Heart right ventricle (tissue), 16 donors: ENCODE measurements at regions of chr7 and their contacts with region 1.

Region 1: DNA sequence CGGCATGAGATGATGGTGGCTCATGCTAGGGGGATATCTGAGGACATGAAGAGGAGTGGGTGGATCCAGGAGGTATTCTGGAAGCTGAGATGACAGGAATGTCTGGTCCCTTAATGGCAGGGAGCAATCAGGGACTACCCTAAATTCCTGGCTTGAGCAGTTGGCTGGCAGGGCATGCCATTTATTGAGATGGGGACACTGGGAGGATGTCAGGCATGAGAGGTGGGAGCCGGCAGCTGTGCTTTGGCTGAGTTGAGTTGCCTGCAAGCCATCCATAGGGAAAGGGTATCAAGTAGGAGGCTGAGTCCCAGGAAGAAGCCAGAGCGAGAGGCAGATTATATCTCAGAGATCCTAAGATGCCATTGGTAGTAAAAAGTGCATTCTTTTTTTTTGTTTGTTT is 69.6 kb downstream of the COL26A1 start:
- DNase-seq: no peak
- ATAC-seq: no peak
- H3K4me3 ChIP-seq: no peak overlapping the region
- H3K27ac ChIP-seq: no peak overlapping the region
- H3K4me1 ChIP-seq: no peaks in the 10 kb centered on the region
- H3K27me3 ChIP-seq: peaks cover 0 to 72% (median 38%) of the 10 kb centered on the region in 7 donors
- CTCF ChIP-seq: no peak

Region 2: GRCh38 chr7:101347477-101347876 is 84.8 kb before region 1 on chr7:
- intact Hi-C with region 1: no loop called
- DNase-seq: no peak
- ATAC-seq: no peak
- H3K4me3 ChIP-seq: no peak overlapping the region
- H3K27ac ChIP-seq: no peak overlapping the region
- H3K4me1 ChIP-seq: no peaks in the 10 kb centered on the region
- H3K27me3 ChIP-seq: peaks cover 0 to 36% (median 6%) of the 10 kb centered on the region in 7 donors
- CTCF ChIP-seq: no peak

Region 3: DNA sequence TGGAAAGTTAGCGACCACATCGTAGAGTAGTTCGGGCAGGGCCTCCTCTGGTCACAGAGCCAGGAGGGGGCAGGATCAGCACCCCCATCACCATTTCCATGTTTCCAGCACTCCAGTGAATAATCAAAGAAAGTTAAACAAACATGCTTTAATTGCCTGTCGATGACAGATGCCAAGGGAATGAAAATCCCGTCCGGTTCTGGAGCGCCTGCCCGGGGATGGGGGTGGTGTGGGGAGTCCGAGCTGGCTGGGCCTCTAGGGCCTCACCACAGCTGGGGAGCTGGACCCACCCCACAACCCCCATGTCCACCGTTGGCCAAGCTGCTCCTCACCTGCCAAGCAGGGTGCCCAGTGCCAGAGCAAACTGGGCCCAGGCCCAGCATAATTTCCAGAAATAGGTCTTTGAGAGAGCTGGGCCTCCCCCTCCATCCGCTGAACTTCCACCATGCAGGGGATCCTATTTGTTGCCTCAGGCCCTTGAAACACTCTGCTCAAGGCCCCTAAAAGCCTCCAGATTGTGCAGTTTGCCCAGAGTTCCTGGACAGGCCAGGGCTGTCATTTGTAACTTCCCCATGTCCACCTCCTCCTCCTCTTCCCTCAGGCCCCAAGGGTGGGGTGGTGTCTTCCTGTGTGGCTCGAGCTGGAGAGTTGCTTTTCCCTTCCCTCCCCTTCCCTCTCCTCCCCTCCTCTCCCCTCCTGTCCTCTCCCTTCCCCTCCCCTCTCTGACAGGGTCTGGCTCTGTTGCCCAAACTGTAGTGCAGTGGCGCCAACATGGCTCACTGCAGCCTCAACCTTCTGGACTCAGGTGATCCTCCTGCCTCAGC is 95.7 kb after region 1 on chr7:
- intact Hi-C with region 1: no loop called
- DNase-seq: peak; percentile 21 to 35
- ATAC-seq: peak; percentile 50 to 86 (median 68)
- H3K4me3 ChIP-seq: no peak overlapping the region
- H3K27ac ChIP-seq: peak overlapping the region in 2 of 10 donors; percentile 21 to 22
- H3K4me1 ChIP-seq: peaks cover 0 to 4% (median 0%) of the 10 kb centered on the region in 9 donors
- H3K27me3 ChIP-seq: peaks cover 0 to 7% (median 0%) of the 10 kb centered on the region in 7 donors
- CTCF ChIP-seq: no peak

Region 4: DNA sequence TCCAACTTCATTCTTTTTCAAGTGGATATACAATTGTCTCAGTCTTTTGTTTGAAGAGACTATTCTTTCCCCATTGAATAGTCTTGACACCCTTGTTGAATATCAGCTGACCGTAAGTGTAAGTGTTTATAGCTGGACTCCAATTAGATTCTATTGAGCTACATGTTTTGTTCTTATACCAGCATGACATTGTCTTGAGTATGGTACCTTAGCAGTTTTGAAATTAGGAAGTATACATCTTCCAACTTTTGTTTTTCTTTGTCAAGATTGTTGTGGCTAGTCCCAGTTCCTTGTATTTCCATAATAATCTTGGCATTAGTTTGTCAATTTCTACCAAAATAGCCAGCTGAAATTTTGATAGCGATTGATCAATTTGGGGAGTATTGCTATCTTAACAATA is 139.8 kb after region 1 on chr7:
- intact Hi-C with region 1: loop called in 1 of 10 experiments (anchors 5 kb)
- DNase-seq: no peak
- ATAC-seq: no peak
- H3K4me3 ChIP-seq: no peak overlapping the region
- H3K27ac ChIP-seq: no peak overlapping the region
- H3K4me1 ChIP-seq: no peaks in the 10 kb centered on the region
- H3K27me3 ChIP-seq: peaks cover 0 to 14% (median 6%) of the 10 kb centered on the region in 7 donors
- CTCF ChIP-seq: no peak

Region 5: DNA sequence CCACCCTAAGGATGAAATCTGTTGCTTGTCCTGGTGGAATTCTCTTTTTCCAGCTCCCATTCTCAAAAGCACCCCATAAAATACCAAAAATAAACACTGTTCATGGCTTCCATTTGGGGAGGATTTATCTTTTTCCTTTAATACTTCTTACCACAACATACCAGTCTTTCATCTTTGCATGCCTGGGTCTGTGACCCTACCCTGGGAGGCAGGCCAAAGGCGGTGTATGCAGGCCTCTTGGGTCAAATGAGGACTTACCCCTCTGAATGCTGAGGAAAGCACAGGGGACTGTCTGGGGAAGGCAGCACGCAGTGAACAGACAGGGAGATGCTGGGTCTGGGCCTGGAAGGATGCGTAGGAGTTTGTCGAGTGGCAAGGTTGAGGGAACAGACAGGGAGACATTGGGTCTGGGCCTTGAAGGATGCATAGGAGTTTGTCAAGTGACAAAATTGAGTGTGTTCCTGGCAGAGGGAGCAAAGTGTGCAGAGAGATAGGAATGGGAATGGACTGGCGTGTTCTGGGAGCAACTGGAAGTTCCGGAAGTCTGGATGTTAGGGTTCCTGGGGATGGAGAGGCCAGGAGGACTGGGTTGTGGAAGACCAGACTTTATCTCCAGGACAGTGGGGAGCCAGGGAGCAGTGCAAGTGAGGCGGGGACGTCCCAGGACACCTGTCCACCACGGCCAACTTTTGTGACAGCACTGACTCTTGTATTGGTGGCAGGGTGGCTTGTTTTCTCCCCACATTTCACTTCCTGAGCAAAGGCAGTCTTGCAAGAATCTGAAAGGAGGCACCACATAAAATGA is 156.0 kb after region 1 on chr7:
- intact Hi-C with region 1: no loop called
- DNase-seq: no peak
- ATAC-seq: no peak
- H3K4me3 ChIP-seq: no peak overlapping the region
- H3K27ac ChIP-seq: no peak overlapping the region
- H3K4me1 ChIP-seq: no peaks in the 10 kb centered on the region
- H3K27me3 ChIP-seq: no peaks in the 10 kb centered on the region
- CTCF ChIP-seq: no peak

Region 6: DNA sequence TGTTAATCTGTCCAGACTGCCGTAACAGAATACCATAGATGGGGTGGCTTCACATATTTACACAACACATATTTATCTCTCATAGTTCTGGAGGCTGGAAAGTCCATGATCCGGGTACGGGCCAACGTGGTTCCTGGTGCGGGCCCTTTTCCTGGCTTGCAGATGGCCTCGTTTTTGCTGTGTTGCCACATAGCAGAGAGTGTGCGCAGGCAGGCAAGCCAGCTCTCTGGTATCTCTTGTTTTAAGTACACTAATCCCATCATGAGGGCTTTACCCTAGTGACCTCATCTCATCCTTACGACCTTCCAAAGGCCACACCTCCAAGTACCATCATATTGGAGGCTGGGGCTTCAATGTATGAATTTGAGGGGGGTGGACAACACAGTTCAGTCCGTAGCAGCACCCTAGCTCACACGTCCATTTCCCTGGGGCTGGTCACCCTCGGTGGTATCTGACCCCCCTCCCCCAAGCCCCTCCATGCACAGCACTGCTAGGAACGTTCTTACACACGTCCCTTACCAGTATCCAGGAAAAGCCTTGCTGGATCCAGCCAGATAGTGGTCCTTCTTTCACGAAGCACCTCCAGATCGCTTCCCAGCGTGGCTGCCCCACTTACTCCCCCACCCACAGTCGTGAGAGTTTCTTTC is 406.6 kb after region 1 on chr7:
- intact Hi-C with region 1: no loop called
- DNase-seq: no peak
- ATAC-seq: peak in 7 of 8 donors; percentile 38 to 94 (median 79)
- H3K4me3 ChIP-seq: no peak overlapping the region
- H3K27ac ChIP-seq: peak overlapping the region in 5 of 10 donors; percentile 38 to 61 (median 48)
- H3K4me1 ChIP-seq: peaks cover 0 to 25% (median 14%) of the 10 kb centered on the region in 9 donors
- H3K27me3 ChIP-seq: no peaks in the 10 kb centered on the region
- CTCF ChIP-seq: no peak